Heart right ventricle (tissue), 16 donors: ENCODE measurements at regions of chr4 and their contacts with region 1.

Region 1: DNA sequence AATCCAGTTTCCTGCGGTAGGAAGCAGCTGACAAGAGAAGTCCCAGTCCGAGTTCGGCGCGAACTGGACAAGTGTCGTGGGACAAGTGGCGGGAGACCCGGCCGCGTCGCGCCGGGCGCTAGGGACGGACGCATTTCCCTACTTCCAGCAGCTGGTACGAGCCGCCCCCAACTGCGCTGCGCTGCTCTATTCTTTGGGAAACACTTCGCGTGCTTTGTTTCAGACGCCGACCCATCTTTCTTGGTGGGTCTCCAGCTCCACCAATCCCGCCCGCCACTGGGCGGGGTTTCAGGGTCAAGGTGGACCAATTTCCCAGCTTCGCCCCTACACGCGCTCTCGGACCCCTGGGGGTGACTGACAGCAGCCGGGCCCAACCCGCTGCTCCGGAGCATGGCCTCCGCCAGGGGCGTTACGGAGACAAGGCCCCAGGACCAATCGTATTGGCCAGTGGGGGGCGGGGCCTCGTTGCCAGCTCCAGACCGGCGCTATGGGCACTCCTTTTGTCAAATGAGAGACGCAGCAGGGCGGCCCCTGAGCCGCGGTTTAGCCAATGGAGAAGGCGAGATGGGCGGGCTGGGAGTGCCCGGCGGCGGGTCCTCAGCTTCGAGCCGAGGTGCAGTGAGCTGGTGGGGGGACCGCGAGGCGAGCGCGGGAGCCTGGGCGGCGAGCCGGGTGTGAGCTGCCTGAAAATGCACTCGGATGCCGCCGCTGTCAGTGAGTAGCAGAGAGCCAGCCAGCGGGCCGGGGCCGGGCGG is at the start of gene DCUN1D4:
- DNase-seq: peak; percentile 100
- ATAC-seq: peak; percentile 93 to 98 (median 96)
- H3K4me3 ChIP-seq: peak within 1 kb of the TSS; percentile 64 to 97 (median 80)
- H3K27ac ChIP-seq: peak within 1 kb of the TSS; percentile 74 to 99 (median 92)
- H3K4me1 ChIP-seq: peaks cover 0 to 28% (median 16%) of the 10 kb centered on the region in 9 donors
- H3K27me3 ChIP-seq: no peaks in the 10 kb centered on the region
- CTCF ChIP-seq: peak in 8 of 9 donors; percentile 41 to 72 (median 52)
- total RNA-seq, gene DCUN1D4: 30.6 to 48.7 (median 37.6) TPM

Region 2: DNA sequence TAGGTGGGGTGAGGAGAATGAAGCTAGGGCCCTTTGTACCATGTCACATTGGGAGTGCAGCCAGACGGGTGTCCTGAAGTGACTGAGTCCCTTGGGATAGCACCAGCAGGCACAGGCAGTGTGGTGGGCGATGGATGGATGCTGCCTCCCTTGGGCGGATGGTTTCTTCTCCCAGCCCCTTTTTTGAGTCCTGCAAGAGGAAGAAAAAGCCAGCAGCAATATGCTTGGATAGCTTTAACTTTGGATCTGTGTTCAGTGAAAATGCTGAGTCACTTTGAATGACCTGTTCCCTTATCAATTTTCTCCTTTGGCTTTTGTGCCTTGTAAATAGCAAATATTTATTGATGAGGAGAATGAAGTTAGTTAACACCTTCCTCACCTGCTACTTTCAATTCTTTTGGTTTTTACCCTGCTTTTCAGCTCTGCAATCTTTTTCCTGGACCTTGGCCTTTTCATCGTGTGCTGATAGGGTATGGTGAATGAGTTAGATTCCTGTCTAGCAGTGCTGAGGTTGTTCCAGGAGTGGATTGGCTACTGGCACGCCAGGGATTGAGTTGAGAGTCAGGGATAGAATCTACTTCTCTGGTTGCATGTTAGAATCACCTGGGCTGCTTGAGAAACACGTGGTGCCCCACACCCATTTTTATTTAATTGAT is 10.4 kb after region 1 on chr4:
- intact Hi-C with region 1: no loop called
- DNase-seq: peak in 1 of 2 donors; percentile 15
- ATAC-seq: peak in 6 of 8 donors; percentile 52 to 78 (median 70)
- H3K4me3 ChIP-seq: no peak overlapping the region
- H3K27ac ChIP-seq: peak overlapping the region in 6 of 10 donors; percentile 18 to 38 (median 25)
- H3K4me1 ChIP-seq: peaks cover 0 to 87% (median 31%) of the 10 kb centered on the region in 9 donors
- H3K27me3 ChIP-seq: no peaks in the 10 kb centered on the region
- CTCF ChIP-seq: no peak

Region 3: GRCh38 chr4:51895813-51896408 is 53.2 kb after region 1 on chr4:
- intact Hi-C with region 1: loop called in 2 of 10 experiments (anchors 5 kb)
- DNase-seq: peak in 1 of 2 donors; percentile 70
- ATAC-seq: peak; percentile 89 to 98 (median 94)
- H3K4me3 ChIP-seq: no peak overlapping the region
- H3K27ac ChIP-seq: peak overlapping the region in 4 of 10 donors; percentile 5 to 38 (median 30)
- H3K4me1 ChIP-seq: peaks cover 0 to 25% (median 3%) of the 10 kb centered on the region in 9 donors
- H3K27me3 ChIP-seq: no peaks in the 10 kb centered on the region
- CTCF ChIP-seq: peak; percentile 65 to 90 (median 81)

Region 4: DNA sequence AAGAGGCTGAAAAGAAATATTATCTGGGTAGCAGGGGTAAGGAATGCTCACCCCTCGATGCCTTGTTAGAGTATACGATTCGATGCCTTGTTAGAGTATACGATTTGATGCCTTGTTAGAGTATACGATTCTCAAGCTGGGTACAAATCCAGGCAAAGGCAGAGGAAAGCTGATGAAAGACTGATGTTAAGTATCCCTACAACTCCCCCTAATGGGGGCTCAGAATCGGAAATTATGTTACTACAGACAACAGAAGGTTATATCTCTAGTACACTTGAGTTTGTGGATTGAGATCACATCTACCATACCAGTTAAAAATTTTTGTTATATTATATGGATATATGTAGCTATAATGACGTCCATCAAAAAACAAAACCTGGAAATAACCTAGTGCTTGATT is 172.6 kb after region 1 on chr4:
- intact Hi-C with region 1: loop called in 2 of 10 experiments (anchors 5 to 10 kb)
- DNase-seq: no peak
- ATAC-seq: no peak
- H3K4me3 ChIP-seq: no peak overlapping the region
- H3K27ac ChIP-seq: no peak overlapping the region
- H3K4me1 ChIP-seq: peaks cover 0 to 10% (median 0%) of the 10 kb centered on the region in 9 donors
- H3K27me3 ChIP-seq: no peaks in the 10 kb centered on the region
- CTCF ChIP-seq: peak in 3 of 9 donors; percentile 6 to 19 (median 11)

Region 5: DNA sequence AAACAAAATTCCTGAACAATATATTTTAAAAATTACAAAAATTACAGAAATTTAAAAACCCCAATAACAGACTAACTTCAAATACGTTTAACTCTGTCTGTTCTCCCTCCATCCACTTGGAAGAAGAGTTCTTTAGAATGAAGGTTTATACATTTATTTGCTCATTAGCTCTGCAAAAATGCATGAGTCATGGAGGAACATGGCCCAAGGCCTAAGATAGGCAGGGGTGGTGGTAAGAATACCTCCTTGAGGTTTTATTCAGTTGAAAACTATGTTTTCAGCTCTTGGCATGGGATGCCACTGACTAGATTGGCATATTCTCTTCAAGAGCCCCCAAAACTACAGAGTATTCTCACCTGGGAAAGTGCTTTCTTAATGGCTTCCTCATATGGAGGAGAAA is 186.2 kb after region 1 on chr4:
- intact Hi-C with region 1: loop called in 2 of 10 experiments (anchors 10 kb)
- DNase-seq: no peak
- ATAC-seq: no peak
- H3K4me3 ChIP-seq: no peak overlapping the region
- H3K27ac ChIP-seq: no peak overlapping the region
- H3K4me1 ChIP-seq: peaks cover 0 to 9% (median 0%) of the 10 kb centered on the region in 9 donors
- H3K27me3 ChIP-seq: no peaks in the 10 kb centered on the region
- CTCF ChIP-seq: no peak

Region 6: DNA sequence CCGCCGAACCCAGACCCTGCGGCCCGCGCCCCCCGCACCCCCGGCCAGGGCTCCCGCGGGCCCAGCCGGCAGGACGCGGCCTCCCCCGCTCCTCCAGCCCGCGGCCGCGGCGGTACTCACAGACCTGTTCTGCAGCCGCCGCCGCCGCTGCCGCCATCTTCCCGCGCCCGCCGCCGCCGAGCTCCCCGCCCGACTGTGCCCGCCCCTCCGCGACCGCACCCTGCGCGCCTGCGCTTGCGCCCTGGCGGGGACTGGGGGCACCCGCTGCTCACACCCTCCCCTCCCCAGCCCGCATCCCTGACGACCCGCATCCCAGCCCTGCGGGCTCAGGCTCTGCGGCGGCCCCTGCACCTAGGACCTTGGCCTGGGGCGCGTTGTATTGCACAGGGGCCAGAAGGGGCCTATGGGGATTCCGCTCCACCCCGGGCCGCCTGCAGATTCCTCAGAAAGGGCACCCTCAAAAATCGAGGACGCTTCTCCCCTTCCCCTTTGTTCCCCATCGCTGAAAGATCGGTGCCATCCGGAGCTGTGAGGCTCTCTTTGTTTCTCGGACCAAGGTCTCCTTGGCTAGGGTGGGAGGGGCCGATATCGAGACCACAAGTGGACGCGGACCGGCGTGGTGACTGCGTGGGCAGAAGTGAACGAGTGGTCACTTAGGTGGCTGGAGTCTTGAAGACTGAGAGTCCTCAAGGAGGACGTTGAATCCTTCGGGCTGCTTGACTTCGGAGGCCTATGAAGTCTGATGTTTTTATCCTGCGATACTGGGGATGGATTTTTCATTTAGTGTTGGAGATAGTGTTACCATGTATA is 195.6 kb after region 1 on chr4 and contains the start of gene SGCB:
- intact Hi-C with region 1: loop called in 6 of 10 experiments (anchors 2 to 10 kb)
- DNase-seq: peak; percentile 69 to 82
- ATAC-seq: peak; percentile 86 to 93 (median 92)
- H3K4me3 ChIP-seq: peak within 1 kb of the TSS; percentile 70 to 98 (median 80)
- H3K27ac ChIP-seq: peak within 1 kb of the TSS; percentile 81 to 92 (median 89)
- H3K4me1 ChIP-seq: peaks cover 0 to 37% (median 20%) of the 10 kb centered on the region in 9 donors
- H3K27me3 ChIP-seq: peaks cover 0 to 37% (median 0%) of the 10 kb centered on the region in 7 donors
- CTCF ChIP-seq: no peak
- total RNA-seq, gene SGCB: 75.9 to 124 (median 91.8) TPM